CD8-positive, alpha-beta T cell (primary cell): ENCODE measurements at regions of chr17 and their contacts with region 1.

Region 1: GRCh38 chr17:36601303-36602029 is at the start of gene MRM1:
- DNase-seq: peak; percentile 76 to 95 (median 93)
- ATAC-seq: peak; percentile 82
- H3K4me3 ChIP-seq: peak within 1 kb of the TSS; percentile 87 to 99
- H3K4me3 Mint-ChIP-seq: peak within 1 kb of the TSS; percentile 94
- H3K27ac ChIP-seq: peak within 1 kb of the TSS; percentile 71 to 73
- H3K27ac Mint-ChIP-seq: peak within 1 kb of the TSS; percentile 95
- H3K4me1 ChIP-seq: peaks cover 17% of the 10 kb centered on the region
- H3K4me1 Mint-ChIP-seq: peaks cover 39% of the 10 kb centered on the region
- H3K27me3 ChIP-seq: no peaks in the 10 kb centered on the region
- H3K27me3 Mint-ChIP-seq: no peaks in the 10 kb centered on the region
- CTCF ChIP-seq: no peak
- total RNA-seq, gene MRM1: 1.4 TPM

Region 2: GRCh38 chr17:36089888-36090836 is 511.3 kb before region 1 on chr17 and contains the start of gene CCL3:
- CTCF ChIA-PET with region 1: no interaction called
- POLR2A ChIA-PET with region 1: no interaction called
- intact Hi-C with region 1: no loop called
- DNase-seq: peak in 4 of 9 experiments; percentile 25 to 75 (median 49)
- ATAC-seq: peak; percentile 49
- H3K4me3 ChIP-seq: peak within 1 kb of the TSS in 1 of 2 experiments; percentile 25
- H3K4me3 Mint-ChIP-seq: peak within 1 kb of the TSS; percentile 37
- H3K27ac ChIP-seq: peak within 1 kb of the TSS; percentile 3 to 52
- H3K27ac Mint-ChIP-seq: peak within 1 kb of the TSS; percentile 58
- H3K4me1 ChIP-seq: peaks cover 5% of the 10 kb centered on the region
- H3K4me1 Mint-ChIP-seq: peaks cover 42% of the 10 kb centered on the region
- H3K27me3 ChIP-seq: no peaks in the 10 kb centered on the region
- H3K27me3 Mint-ChIP-seq: peaks cover 9% of the 10 kb centered on the region
- CTCF ChIP-seq: no peak
- total RNA-seq, gene CCL3: 7.1 to 8.1 TPM

Region 3: GRCh38 chr17:36486204-36487194 is 115.0 kb before region 1 on chr17 and contains the start of gene ZNHIT3:
- CTCF ChIA-PET with region 1: no interaction called
- POLR2A ChIA-PET with region 1: no interaction called
- intact Hi-C with region 1: loop called (anchors 1 to 5 kb)
- DNase-seq: peak; percentile 80 to 96 (median 90)
- ATAC-seq: peak; percentile 96
- H3K4me3 ChIP-seq: peak within 1 kb of the TSS; percentile 64 to 97
- H3K4me3 Mint-ChIP-seq: peak within 1 kb of the TSS; percentile 100
- H3K27ac ChIP-seq: peak within 1 kb of the TSS; percentile 69 to 70
- H3K27ac Mint-ChIP-seq: peak within 1 kb of the TSS; percentile 99
- H3K4me1 ChIP-seq: peaks cover 45% of the 10 kb centered on the region
- H3K4me1 Mint-ChIP-seq: peaks cover 55% of the 10 kb centered on the region
- H3K27me3 ChIP-seq: peaks cover 0 to 10% of the 10 kb centered on the region in 2 experiments
- H3K27me3 Mint-ChIP-seq: peaks cover 10% of the 10 kb centered on the region
- CTCF ChIP-seq: no peak
- total RNA-seq, gene ZNHIT3: 82.2 to 87.1 TPM

Region 4: DNA sequence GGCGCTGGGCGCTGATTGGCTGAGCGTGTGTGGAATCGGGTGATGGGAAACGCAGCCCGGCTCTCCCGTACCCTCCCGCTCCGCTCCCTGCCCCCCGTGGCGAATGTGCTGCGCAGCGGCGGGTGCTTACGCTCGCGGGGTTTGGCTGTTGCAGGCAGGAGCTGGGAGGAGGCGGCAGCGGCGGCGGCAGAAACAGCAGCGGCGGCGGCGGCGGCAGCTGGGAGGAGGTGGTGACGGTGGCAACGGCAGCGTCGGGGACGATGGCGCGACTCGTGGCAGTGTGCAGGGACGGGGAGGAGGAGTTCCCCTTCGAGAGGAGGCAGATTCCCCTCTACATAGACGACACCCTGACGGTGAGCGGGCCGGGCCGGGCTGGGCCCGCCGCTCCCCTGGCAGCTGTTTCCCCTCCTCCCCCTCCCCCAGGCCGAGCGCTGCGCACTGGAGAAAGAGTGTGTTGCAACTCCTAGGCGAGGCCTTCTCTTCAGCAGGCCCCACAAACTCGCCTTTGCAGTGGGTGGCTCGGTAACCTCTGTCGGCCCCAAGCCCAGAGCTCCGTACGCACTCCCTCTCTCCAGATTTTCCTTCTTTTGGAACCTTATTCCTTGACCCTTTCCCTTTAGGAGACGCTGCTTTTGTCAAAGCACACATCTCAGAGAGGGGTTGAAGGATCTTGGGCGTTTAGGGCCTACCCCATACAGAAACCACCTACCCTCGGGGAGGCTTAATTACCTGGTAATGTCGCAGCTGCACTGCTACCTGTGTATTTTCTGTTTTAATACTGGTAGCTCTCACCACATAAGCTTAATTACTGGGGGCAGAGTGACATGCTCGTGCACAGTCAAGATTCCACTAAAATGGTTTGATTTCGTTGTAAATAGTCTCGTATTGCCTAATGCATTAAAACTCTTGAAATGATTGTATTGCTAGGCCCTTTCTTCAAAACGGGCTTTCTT is 55.7 kb before region 1 on chr17:
- CTCF ChIA-PET with region 1: interaction called, 8 read pairs
- POLR2A ChIA-PET with region 1: interaction called, 23 read pairs
- intact Hi-C with region 1: loop called (anchors 1 kb)
- DNase-seq: peak; percentile 92 to 99 (median 97)
- ATAC-seq: peak; percentile 76
- H3K4me3 ChIP-seq: peak overlapping the region; percentile 66 to 94
- H3K4me3 Mint-ChIP-seq: peak overlapping the region; percentile 95
- H3K27ac ChIP-seq: peak overlapping the region; percentile 67 to 96
- H3K27ac Mint-ChIP-seq: peak overlapping the region; percentile 96
- H3K4me1 ChIP-seq: peaks cover 44% of the 10 kb centered on the region
- H3K4me1 Mint-ChIP-seq: peaks cover 50% of the 10 kb centered on the region
- H3K27me3 ChIP-seq: no peaks in the 10 kb centered on the region
- H3K27me3 Mint-ChIP-seq: no peaks in the 10 kb centered on the region
- CTCF ChIP-seq: no peak

Region 5: DNA sequence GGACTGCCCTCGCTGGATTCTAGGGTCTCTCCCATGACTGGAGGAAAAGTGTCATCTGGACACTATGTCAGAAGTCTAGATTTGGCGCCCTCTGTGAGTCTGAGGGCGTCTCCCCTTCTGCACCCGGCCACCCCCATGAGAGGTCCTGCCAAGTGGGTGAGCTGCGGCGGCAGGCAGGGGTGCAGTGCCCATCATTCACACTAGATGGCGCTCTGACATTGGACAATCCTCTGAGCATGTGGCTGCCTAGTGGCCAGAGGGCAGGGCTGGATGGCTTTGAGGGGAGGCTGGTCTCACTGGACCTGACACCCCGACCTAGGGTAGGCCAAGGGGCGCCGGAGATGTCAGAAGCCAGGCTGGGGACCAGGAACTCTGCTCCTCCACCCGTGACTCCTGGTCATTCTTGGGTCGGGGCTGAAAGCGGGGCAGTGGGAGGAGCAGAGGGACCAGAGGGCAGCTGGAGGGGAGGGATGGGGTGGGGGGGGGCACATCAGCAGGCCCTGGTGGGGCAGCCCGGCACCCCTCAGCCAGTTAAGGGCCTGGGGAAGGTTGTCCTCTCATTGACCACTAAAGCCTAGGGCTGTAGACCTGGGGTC is 27.9 kb after region 1 on chr17:
- CTCF ChIA-PET with region 1: interaction called, 10 read pairs
- POLR2A ChIA-PET with region 1: no interaction called
- intact Hi-C with region 1: loop called in 1 of 2 experiments (anchors 1 kb)
- DNase-seq: peak; percentile 64 to 88 (median 80)
- ATAC-seq: peak; percentile 89
- H3K4me3 ChIP-seq: no peak overlapping the region
- H3K4me3 Mint-ChIP-seq: no peak overlapping the region
- H3K27ac ChIP-seq: no peak overlapping the region
- H3K27ac Mint-ChIP-seq: no peak overlapping the region
- H3K4me1 ChIP-seq: no peaks in the 10 kb centered on the region
- H3K4me1 Mint-ChIP-seq: no peaks in the 10 kb centered on the region
- H3K27me3 ChIP-seq: no peaks in the 10 kb centered on the region
- H3K27me3 Mint-ChIP-seq: peaks cover 5% of the 10 kb centered on the region
- CTCF ChIP-seq: peak; percentile 98

Region 6: GRCh38 chr17:36722121-36722902 is 120.8 kb after region 1 on chr17:
- CTCF ChIA-PET with region 1: interaction called, 3 read pairs
- POLR2A ChIA-PET with region 1: interaction called, 3 read pairs
- intact Hi-C with region 1: loop called in 1 of 2 experiments (anchors 1 kb)
- DNase-seq: peak; percentile 53 to 91 (median 77)
- ATAC-seq: peak; percentile 95
- H3K4me3 ChIP-seq: peak overlapping the region; percentile 49 to 61
- H3K4me3 Mint-ChIP-seq: peak overlapping the region; percentile 84
- H3K27ac ChIP-seq: peak overlapping the region; percentile 66 to 82
- H3K27ac Mint-ChIP-seq: peak overlapping the region; percentile 99
- H3K4me1 ChIP-seq: peaks cover 42% of the 10 kb centered on the region
- H3K4me1 Mint-ChIP-seq: peaks cover 60% of the 10 kb centered on the region
- H3K27me3 ChIP-seq: no peaks in the 10 kb centered on the region
- H3K27me3 Mint-ChIP-seq: no peaks in the 10 kb centered on the region
- CTCF ChIP-seq: no peak

Region 7: DNA sequence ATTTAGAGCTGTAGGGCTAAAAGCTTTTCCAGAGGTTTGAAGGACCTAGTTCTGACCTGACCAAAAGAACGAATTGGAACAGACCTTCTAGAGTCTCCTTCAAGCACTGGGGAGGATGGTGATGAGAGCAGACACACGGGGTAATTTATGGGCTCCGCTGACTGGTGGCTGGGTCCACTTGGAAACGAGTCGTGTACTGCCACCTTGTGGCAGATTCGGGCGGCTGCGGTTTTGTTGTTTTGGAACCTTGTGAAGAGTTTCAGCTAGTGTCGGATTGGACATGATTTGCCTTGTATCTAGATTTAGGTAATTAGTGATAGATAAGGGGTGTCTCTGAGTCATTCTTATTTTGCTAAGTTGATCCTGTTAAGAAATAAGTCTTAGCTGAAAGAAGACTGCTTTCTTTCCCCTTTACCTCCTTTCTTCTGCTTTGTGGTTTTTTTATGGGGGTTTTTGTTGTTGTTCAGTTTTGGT is 446.2 kb after region 1 on chr17:
- CTCF ChIA-PET with region 1: interaction called, 55 read pairs
- POLR2A ChIA-PET with region 1: interaction called, 3 read pairs
- intact Hi-C with region 1: loop called (anchors 1 kb)
- DNase-seq: peak; percentile 59 to 87 (median 81)
- ATAC-seq: peak; percentile 90
- H3K4me3 ChIP-seq: no peak overlapping the region
- H3K4me3 Mint-ChIP-seq: no peak overlapping the region
- H3K27ac ChIP-seq: no peak overlapping the region
- H3K27ac Mint-ChIP-seq: peak overlapping the region; percentile 71
- H3K4me1 ChIP-seq: no peaks in the 10 kb centered on the region
- H3K4me1 Mint-ChIP-seq: peaks cover 12% of the 10 kb centered on the region
- H3K27me3 ChIP-seq: no peaks in the 10 kb centered on the region
- H3K27me3 Mint-ChIP-seq: no peaks in the 10 kb centered on the region
- CTCF ChIP-seq: peak; percentile 68

Region 8: DNA sequence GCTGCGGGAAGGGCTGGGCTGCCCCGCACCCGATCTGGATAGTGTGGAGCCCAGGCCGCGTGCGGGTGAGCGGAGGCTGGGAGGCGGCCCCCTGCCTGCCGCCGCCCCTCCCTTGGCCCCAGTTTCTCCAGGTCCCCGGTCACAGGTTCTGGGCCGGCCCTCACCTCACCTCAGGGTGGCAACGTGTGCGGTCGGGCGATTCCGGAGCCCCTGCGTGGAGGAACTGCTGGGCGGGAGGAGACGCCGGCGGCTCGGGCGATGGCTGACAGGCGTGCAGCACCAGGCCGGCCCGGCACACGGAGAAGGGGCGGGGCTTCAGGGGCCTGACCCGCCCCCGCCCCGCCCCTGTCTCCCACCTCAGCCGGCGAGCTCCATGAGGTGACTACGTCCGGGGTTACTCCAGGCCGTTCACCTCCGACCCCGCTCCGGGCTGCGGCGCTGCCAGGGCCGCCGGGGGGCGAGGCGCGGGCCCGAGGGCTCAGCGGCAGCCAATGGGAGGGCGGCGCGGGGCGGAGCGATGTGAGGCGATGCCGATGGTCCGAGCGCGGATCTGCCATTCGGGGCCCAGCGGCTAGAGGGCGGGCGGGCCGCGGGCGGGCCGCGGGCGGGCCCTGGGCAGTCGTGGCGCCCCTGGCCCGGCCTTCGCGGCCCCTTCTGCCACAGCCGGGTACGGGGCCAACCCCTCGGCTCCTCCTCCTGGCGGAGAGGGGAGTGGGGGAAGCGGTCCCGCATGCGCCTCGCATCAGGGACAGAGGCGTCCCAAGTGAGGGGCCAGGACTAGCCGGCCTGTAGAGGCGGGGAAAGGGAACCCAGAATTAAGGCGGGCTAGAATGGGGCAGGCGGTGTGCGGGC is 757.6 kb after region 1 on chr17:
- CTCF ChIA-PET with region 1: no interaction called
- POLR2A ChIA-PET with region 1: no interaction called
- intact Hi-C with region 1: loop called (anchors 1 to 5 kb)
- DNase-seq: peak; percentile 77 to 97 (median 88)
- ATAC-seq: peak; percentile 95
- H3K4me3 ChIP-seq: peak overlapping the region; percentile 78 to 98
- H3K4me3 Mint-ChIP-seq: peak overlapping the region; percentile 87
- H3K27ac ChIP-seq: peak overlapping the region; percentile 66 to 82
- H3K27ac Mint-ChIP-seq: peak overlapping the region; percentile 87
- H3K4me1 ChIP-seq: peaks cover 16% of the 10 kb centered on the region
- H3K4me1 Mint-ChIP-seq: peaks cover 18% of the 10 kb centered on the region
- H3K27me3 ChIP-seq: no peaks in the 10 kb centered on the region
- H3K27me3 Mint-ChIP-seq: no peaks in the 10 kb centered on the region
- CTCF ChIP-seq: no peak